Stomach (tissue), 19 donors: ENCODE measurements at regions of chr13 and their contacts with region 1.

Region 1: DNA sequence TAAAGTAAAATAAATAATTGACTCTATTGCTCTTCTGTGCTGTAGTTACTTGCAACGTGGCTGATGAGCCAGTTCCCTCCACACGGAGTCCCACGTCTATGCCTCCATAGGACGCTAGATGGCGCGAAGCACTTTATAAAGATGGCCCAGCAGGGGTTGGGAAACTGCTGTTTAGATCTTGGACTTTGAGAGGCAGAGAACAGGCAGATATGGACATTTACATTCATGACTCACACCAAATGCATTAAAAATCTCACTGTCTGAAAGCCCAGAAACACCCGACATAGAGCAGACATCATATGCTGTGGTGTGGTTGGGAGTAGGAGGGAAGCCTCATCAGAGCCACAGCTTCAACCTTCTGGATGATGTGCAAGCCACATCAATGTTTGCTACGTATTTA is 643.1 kb upstream of the ARGLU1 start:
- DNase-seq: peak; percentile 80 to 94
- H3K4me3 ChIP-seq: no peak overlapping the region
- H3K27ac ChIP-seq: no peak overlapping the region
- H3K4me1 ChIP-seq: peaks cover 5 to 20% (median 9%) of the 10 kb centered on the region in 4 donors
- H3K27me3 ChIP-seq: no peaks in the 10 kb centered on the region
- CTCF ChIP-seq: peak in 5 of 7 experiments; percentile 80 to 86 (median 85)
- EP300 ChIP-seq: no peak
- POLR2A ChIP-seq: no peak

Region 2: DNA sequence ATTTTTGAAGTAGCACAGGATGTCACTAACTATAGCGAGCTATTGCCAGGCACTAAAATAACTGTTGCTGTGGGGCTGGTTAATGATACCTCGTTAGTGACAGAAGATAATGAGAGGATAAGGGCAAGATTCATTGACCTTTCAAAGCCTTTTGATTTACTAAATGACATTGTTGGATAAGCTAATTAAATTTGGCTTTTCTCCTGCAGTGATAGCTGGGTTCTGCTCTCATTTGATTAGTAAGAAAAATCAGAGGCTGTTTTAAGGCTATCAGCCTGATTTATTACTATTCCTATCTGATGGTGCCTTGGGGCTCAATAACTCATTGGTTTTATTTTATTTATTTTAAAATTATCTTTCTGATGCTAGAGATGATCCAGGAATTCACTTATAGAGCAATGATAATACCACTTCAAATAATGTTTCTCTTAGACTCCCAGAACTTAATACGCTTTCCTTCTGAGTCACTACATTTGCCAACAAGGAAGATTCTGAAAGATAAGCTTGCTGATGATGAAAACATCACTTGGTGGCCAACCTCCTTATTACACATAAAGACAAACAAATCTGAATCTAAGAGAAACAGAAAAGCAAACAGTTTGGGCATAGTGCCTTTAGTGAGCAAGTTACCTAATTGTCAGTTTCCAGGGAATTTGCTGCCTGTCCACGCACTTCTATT is 141.8 kb before region 1 on chr13:
- intact Hi-C with region 1: no loop called
- DNase-seq: no peak
- H3K4me3 ChIP-seq: no peak overlapping the region
- H3K27ac ChIP-seq: no peak overlapping the region
- H3K4me1 ChIP-seq: no peaks in the 10 kb centered on the region
- H3K27me3 ChIP-seq: no peaks in the 10 kb centered on the region
- CTCF ChIP-seq: no peak
- EP300 ChIP-seq: no peak
- POLR2A ChIP-seq: no peak

Region 3: GRCh38 chr13:107650081-107650701 is 439.1 kb after region 1 on chr13:
- intact Hi-C with region 1: loop called (anchors 10 kb)
- DNase-seq: peak; percentile 53 to 82
- H3K4me3 ChIP-seq: no peak overlapping the region
- H3K27ac ChIP-seq: no peak overlapping the region
- H3K4me1 ChIP-seq: no peaks in the 10 kb centered on the region
- H3K27me3 ChIP-seq: no peaks in the 10 kb centered on the region
- CTCF ChIP-seq: peak in 5 of 7 experiments; percentile 26 to 64 (median 49)
- EP300 ChIP-seq: no peak
- POLR2A ChIP-seq: no peak